Endothelial cell of umbilical vein (primary cell): ENCODE measurements at regions of chr1 and their contacts with region 1.

Region 1: DNA sequence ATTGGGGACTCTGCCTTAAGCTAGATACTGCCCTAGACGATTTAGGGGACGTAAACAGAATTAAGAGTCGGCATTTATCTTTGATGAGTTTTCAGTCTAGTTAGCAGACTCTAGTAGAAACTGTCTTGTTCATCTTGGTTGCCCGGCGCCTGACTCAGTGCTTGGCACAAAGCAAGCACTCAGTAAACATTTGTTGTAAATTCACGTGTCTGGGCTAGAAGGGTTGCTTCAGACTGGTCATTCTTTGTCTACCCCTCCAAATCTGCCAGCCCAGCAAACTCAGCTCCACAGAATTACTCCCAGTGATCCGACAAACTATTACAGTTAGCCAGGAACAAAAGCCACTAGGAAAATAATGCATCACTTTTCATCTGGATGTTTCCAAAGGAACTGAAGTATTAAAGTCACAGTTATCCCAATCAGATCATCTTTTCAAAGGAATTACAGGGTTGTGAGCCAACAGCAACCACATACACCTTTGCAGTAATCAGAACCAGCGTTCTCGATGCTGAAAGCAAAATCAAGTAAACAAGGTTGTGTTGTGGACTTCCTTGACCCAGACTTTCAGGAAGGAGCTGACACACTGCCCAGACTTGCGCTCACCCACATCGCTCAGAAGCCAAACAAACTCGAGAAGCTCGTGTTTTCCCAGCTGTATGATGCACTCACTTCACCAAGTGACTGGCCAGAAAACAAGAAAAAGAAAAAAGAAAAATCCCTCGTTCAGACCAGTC is 66.5 kb upstream of the GADD45A start:
- DNase-seq: peak; percentile 99
- H3K4me3 ChIP-seq: no peak overlapping the region
- H3K27ac ChIP-seq: peak overlapping the region; percentile 92
- H3K4me1 ChIP-seq: peaks cover 24% of the 10 kb centered on the region
- H3K27me3 ChIP-seq: no peaks in the 10 kb centered on the region
- CTCF ChIP-seq: no peak
- POLR2A ChIP-seq: peak; percentile 41

Region 2: GRCh38 chr1:67561704-67562113 is 56.7 kb before region 1 on chr1:
- CTCF ChIA-PET with region 1: interaction called, 14 read pairs
- POLR2A ChIA-PET with region 1: interaction called, 5 read pairs
- dilution Hi-C with region 1: no loop called
- intact Hi-C with region 1: no loop called
- DNase-seq: peak; percentile 92
- H3K4me3 ChIP-seq: no peak overlapping the region
- H3K27ac ChIP-seq: no peak overlapping the region
- H3K4me1 ChIP-seq: peaks cover 11% of the 10 kb centered on the region
- H3K27me3 ChIP-seq: no peaks in the 10 kb centered on the region
- CTCF ChIP-seq: peak; percentile 85
- POLR2A ChIP-seq: no peak

Region 3: GRCh38 chr1:67590329-67590728 is 28.1 kb before region 1 on chr1:
- CTCF ChIA-PET with region 1: no interaction called
- POLR2A ChIA-PET with region 1: no interaction called
- dilution Hi-C with region 1: no loop called
- intact Hi-C with region 1: loop called (anchors 1 kb)
- DNase-seq: peak; percentile 97
- H3K4me3 ChIP-seq: no peak overlapping the region
- H3K27ac ChIP-seq: peak overlapping the region; percentile 38
- H3K4me1 ChIP-seq: peaks cover 3% of the 10 kb centered on the region
- H3K27me3 ChIP-seq: no peaks in the 10 kb centered on the region
- CTCF ChIP-seq: no peak
- POLR2A ChIP-seq: no peak

Region 4: DNA sequence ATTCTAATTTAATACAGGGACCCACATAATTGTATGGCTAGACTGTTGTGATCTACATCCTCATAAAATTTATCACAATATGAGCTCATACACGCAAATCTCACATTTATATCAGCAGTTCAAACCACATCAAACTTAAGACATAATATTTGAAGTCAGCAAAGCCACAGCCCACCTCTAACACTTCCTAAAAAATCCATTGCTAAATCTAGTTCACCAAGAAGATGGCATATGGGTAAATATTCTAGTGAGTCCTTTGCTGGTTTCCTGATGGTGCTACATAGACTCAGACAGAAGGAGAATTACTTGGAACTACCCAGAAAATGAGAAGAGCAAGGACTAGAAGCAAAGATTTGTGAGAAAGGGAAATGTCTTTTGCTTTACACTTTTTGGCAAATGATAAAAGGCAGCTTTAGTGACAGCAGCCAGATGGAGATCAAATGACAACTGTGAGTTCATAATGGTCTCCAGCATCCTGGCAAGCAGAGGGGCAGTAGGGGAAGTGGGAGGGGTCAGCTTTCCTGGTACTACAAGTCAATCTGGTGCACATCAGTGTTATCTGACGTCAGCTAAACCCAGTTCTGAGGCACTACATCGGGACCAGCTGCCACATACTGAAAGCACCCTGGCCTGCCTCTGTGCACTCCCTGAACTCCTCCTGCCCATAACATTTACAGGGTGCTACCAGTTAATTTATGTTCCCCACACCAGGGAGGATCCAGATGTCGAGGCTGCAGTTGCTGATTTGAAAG is 56.0 kb after region 1 on chr1:
- CTCF ChIA-PET with region 1: interaction called, 6 read pairs
- POLR2A ChIA-PET with region 1: interaction called, 3 read pairs
- dilution Hi-C with region 1: no loop called
- intact Hi-C with region 1: loop called (anchors 2 kb)
- DNase-seq: peak; percentile 96
- H3K4me3 ChIP-seq: no peak overlapping the region
- H3K27ac ChIP-seq: peak overlapping the region; percentile 69
- H3K4me1 ChIP-seq: peaks cover 18% of the 10 kb centered on the region
- H3K27me3 ChIP-seq: no peaks in the 10 kb centered on the region
- CTCF ChIP-seq: no peak
- POLR2A ChIP-seq: no peak